ENCODE measurements at regions of chr19 and their contacts with region 1.

Region 1: DNA sequence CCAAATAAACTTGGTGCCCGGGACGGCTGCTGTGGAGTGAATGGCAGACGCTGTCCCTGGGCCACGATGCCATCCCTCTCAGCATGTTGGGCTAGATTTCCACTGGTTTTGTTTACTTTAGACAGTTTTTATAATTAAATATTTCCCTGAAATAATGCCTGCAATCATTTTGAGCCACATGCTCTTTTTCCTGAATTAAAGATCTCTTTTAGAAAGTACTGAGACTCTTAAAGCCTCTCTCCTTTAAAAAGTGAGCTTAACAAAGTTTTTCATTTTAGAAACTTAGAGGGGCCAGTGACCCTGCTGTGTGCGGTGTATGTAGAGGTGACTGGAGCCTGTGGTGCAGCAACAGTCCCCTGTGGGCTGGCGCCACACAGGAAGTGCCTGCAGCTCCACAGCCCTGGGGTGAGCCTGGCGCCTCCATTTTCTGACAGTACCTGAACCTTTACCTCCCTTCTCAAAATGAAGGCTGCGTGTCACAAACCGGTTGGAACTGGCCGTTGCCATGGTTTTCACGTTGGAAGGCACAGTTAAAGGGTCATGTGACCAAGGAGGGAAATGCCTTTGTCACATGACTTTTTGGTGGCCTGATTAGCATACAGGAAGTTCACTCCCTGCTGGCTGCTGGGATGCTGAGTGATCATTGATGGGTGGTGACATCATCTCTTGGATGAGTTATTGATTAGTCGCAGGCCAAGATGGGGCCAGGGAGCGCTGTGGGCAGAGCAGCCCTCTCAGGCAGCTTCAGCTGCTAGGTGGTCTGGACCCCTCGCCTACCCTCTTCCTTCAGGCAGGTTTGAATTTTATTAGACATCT is 26.3 kb downstream of the TSSK6 start:
- DNase-seq: peak; percentile 45 to 91 (median 79)

Region 2: GRCh38 chr19:19366612-19367396 is 122.3 kb before region 1 on chr19:
- intact Hi-C with region 1: loop called (anchors 5 kb)
- DNase-seq: peak; percentile 21 to 77 (median 57)

Region 3: GRCh38 chr19:19663256-19664038 is 174.4 kb after region 1 on chr19 and contains the start of gene ATP13A1:
- intact Hi-C with region 1: no loop called
- DNase-seq: peak; percentile 95 to 99 (median 97)

Measured in head of caudate nucleus (tissue), 42 donors.